Head of caudate nucleus (tissue), 42 donors: ENCODE measurements at regions of chr7 and their contacts with region 1.

Region 1: GRCh38 chr7:24665564-24666294 is 91.5 kb downstream of the GSDME start:
- DNase-seq: peak in 25 of 42 donors; percentile 5 to 84 (median 46)

Region 2: DNA sequence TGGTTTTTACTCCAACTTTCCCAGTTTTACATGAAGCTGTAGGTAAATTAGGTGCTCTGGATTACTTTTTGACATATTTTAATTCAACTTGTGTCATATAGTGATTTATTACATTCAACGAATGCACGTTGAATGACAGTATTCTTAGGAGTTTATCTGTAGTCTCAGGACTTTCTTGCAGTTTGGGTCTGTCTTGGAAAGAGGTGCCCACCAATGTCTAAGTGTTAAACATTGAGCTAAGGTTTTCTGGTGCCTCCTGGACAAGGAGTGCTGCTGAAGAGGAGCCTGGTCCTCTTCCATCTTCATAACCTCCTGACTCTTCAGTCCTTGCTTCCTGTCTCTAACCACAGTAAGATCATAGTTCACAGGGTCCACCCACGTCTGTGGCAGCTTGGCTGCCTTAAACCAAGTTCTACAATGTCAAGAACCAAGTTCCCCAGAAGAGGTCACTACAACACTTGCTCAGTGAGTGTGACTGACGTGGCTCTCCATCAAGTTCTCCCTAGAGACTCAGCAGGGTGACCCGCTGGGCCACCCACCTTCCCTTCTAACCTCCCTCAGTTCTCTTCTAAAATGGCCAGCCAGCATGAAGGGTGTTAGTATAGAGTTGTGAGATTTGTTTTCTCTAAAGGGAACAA is 375.6 kb before region 1 on chr7:
- intact Hi-C with region 1: loop called (anchors 10 kb)
- DNase-seq: peak in 24 of 42 donors; percentile 7 to 67 (median 26)

Region 3: DNA sequence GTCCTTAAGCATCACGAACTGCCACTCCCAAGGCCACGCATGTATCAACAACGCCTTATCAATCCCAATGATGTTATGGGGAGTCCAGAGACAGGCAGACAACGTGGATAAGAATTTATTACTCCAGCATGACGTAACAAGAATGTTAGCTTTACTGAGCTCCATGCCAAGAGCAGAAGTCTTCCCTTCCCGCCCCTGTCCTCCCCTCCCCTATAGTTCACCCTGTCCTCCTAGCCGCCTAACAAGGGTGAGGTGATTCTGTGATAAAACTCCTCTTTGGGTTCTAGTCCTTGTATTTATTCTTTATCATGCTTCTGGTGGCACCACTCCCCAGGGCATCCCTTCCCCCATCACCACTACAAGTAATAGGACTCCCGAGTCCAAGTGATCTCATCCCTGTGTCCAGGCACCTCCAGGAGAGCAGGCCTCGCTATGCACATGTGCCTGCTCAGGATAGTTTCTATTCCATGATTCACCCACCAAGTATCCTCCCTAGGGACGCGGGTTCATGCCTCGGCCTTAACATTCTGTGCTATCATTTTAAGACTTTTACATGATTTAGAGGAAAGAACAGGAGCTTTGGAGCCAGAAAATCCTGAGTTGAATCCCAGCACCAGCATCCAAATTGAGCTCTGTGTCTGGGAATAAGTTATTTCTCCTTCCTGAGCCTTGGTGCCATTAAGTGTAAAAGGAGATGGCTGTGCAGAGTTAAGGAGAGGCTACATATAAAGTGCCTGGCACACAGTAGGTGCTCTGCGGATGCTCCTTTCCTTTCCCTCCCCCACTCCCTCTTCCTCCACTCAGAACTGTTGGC is 76.2 kb after region 1 on chr7:
- intact Hi-C with region 1: no loop called
- DNase-seq: no peak

Region 4: GRCh38 chr7:24767878-24768569 is 102.3 kb after region 1 on chr7:
- intact Hi-C with region 1: no loop called
- DNase-seq: no peak